Activated naive CD8-positive, alpha-beta T cell treated with anti-CD3 and anti-CD28 coated beads, Interleukin-2, amount 10 ng/mL, durations not matched to agents 7 days and 5 days (primary cell): ENCODE measurements at regions of chr2 and their contacts with region 1.

Region 1: GRCh38 chr2:10043906-10044601 is 704 bp downstream of the KLF11 start:
- DNase-seq: peak; percentile 89
- ATAC-seq: peak; percentile 67
- H3K4me3 Mint-ChIP-seq: peak overlapping the region; percentile 72
- H3K27ac Mint-ChIP-seq: peak overlapping the region; percentile 86
- H3K4me1 Mint-ChIP-seq: peaks cover 16% of the 10 kb centered on the region
- H3K27me3 Mint-ChIP-seq: peaks cover 27% of the 10 kb centered on the region

Region 2: GRCh38 chr2:10028988-10029874 is 14.8 kb before region 1 on chr2:
- POLR2A ChIA-PET with region 1: interaction called, 11 read pairs
- DNase-seq: peak; percentile 57
- ATAC-seq: peak; percentile 95
- H3K4me3 Mint-ChIP-seq: peak overlapping the region; percentile 46
- H3K27ac Mint-ChIP-seq: peak overlapping the region; percentile 56
- H3K4me1 Mint-ChIP-seq: peaks cover 8% of the 10 kb centered on the region
- H3K27me3 Mint-ChIP-seq: peaks cover under 1% of the 10 kb centered on the region